ENCODE measurements at regions of chr2 and their contacts with region 1.

Region 1: DNA sequence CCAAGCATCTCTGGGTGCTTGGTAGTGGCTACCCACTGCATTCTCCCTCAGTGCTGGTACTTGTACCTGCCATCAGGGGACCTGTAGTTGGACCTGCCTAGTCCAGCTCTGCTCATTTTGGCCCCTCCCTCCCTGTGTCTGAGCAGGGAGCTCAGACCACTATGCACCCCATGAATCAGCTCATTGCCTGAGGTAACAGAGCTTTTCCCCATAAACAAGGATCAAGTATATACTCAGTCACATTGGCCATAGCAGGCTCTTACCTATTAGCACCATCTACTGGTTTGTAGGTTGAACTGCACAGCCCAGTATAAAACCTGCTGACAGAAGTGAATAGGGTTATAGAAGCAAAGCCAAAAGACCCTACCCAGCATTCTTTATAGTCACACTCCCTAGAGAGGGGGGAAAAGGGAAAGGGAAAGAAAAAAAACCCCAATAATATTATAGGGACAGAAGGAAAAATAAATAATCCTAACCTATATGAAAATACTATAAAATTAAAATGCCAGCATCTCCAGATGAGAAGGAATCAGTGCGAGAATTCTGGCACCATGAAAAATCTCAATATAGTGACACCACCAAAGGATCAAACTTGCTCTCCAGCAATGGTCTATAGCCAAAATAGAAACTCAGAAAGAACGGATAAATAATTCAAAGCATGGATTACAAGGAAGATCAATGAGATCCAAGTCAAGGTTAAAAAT is 6.9 kb upstream of the FLACC1 start:
- DNase-seq: peak; percentile 70
- H3K4me3 ChIP-seq: no peak overlapping the region
- H3K27ac ChIP-seq: no peak overlapping the region
- H3K4me1 ChIP-seq: peaks cover 5% of the 10 kb centered on the region
- H3K27me3 ChIP-seq: no peaks in the 10 kb centered on the region
- CTCF ChIP-seq: peak; percentile 84 to 87

Region 2: GRCh38 chr2:201182650-201183364 is 181.2 kb before region 1 on chr2 and contains the start of gene CASP10:
- CTCF ChIA-PET with region 1: interaction called, 3 read pairs
- dilution Hi-C with region 1: no loop called
- in situ Hi-C with region 1: no loop called
- intact Hi-C with region 1: loop called (anchors 2 kb)
- DNase-seq: peak; percentile 82
- H3K4me3 ChIP-seq: peak within 1 kb of the TSS; percentile 42 to 52 (median 45)
- H3K27ac ChIP-seq: peak within 1 kb of the TSS; percentile 56
- H3K4me1 ChIP-seq: peaks cover 5% of the 10 kb centered on the region
- H3K27me3 ChIP-seq: no peaks in the 10 kb centered on the region
- CTCF ChIP-seq: peak; percentile 54 to 62
- total RNA-seq, gene CASP10: 4.5 to 5.7 TPM

Region 3: GRCh38 chr2:201257956-201258665 is 105.9 kb before region 1 on chr2:
- CTCF ChIA-PET with region 1: no interaction called
- dilution Hi-C with region 1: loop called (anchors 5 kb)
- in situ Hi-C with region 1: no loop called
- intact Hi-C with region 1: loop called (anchors 1 kb)
- DNase-seq: peak; percentile 91
- H3K4me3 ChIP-seq: peak overlapping the region; percentile 50 to 57 (median 54)
- H3K27ac ChIP-seq: peak overlapping the region; percentile 96
- H3K4me1 ChIP-seq: peaks cover 24% of the 10 kb centered on the region
- H3K27me3 ChIP-seq: no peaks in the 10 kb centered on the region
- CTCF ChIP-seq: peak in 1 of 2 donors; percentile 28